Prostate gland (tissue), 2 donors: ENCODE measurements at regions of chr1 and their contacts with region 1.

Region 1: GRCh38 chr1:16946646-16947045 is 24.9 kb downstream of the CROCC start:
- DNase-seq: no peak
- H3K4me3 ChIP-seq: no peak overlapping the region
- H3K27ac ChIP-seq: no peak overlapping the region
- H3K4me1 ChIP-seq: peaks cover 3% of the 10 kb centered on the region
- H3K27me3 ChIP-seq: no peaks in the 10 kb centered on the region
- CTCF ChIP-seq: no peak
- POLR2A ChIP-seq: no peak

Region 2: GRCh38 chr1:16618719-16619118 is 327.9 kb before region 1 on chr1:
- intact Hi-C with region 1: loop called (anchors 1 kb)
- DNase-seq: no peak
- H3K4me3 ChIP-seq: no peak overlapping the region
- H3K27ac ChIP-seq: no peak overlapping the region
- H3K4me1 ChIP-seq: peaks cover 3% of the 10 kb centered on the region
- H3K27me3 ChIP-seq: no peaks in the 10 kb centered on the region
- CTCF ChIP-seq: no peak
- POLR2A ChIP-seq: no peak

Region 3: DNA sequence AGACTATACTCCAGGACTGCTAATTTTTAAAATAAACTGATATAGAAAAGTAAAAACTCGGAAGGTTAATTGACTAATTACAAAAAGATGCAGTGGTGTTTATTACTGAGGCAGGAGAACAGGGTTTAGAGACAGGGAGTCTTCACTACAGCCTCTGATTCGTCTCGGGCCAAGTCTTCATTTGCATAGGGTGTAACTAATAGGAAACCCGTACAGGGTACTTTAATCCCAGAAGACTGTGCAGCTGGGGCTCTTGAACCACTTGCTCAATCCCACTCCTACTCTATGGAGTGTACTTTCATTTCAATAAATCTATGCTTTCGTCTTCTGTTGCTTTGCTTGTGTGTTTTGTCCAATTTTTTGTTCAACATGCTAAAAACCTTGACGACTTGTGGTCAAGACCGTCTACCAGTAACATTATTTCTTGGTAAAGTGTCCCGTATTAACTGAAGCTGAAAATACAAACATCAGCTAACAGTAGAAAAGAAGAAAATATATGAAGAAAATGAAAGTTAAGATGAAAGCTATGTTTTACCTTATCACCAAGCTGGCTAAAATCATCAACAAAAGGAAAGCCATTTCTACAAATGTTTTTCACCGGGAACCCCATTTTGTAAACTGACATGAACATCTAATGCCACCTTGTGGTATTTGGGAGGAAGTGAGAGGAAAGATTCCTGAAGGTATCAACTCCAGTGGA is 99.1 kb after region 1 on chr1:
- intact Hi-C with region 1: loop called (anchors 2 kb)
- DNase-seq: no peak
- H3K4me3 ChIP-seq: no peak overlapping the region
- H3K27ac ChIP-seq: no peak overlapping the region
- H3K4me1 ChIP-seq: no peaks in the 10 kb centered on the region
- H3K27me3 ChIP-seq: no peaks in the 10 kb centered on the region
- CTCF ChIP-seq: peak; percentile 42 to 86 (median 78)
- POLR2A ChIP-seq: no peak